Activated CD4-positive, alpha-beta T cell treated with anti-CD3 and anti-CD28 coated beads for 36 hours (primary cell): ENCODE measurements at regions of chr2 and their contacts with region 1.

Region 1: DNA sequence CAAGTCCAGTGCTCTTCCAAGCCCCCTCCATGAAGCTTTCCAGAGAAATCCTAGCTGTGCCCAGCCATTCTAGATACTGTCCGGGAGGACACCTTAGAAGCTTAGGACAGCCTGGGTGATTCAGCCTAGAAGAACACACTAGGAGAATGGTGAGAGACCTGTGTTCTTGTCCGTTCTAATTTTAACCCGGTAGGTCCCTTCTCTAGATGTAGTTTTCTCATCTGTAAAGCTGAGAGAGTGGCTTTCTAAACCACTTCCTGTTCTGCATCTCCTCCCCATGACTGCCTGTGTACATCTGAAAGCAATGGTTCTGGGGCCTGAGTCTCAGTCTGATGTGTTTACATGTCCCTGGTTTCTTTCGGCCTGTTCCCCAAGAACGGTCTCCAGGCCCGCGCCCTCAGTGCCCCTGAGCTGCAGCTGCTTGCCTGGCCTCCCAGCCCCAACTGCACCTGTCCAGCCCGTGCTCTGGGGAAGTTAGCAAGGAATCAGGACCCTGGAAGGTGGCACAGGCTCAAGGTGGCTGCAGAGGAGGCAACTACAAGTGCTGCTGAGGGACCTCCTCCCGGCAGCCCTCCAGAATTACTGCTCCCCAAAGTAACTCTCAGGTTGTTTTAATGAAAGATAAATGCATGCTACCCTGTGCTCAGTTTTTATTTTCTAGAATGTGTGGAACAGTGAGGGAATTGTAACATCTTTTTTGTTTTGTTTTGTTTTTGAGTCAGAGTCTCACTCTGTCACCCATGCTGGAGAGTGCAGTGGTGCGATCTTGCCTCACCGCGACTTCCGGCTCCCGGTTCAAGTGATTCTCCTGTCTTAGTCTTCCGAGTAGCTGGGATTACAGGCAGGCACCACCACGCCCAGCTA is 105.9 kb downstream of the LBH start:
- DNase-seq: peak; percentile 82
- ATAC-seq: peak; percentile 77
- H3K4me3 Mint-ChIP-seq: peak overlapping the region; percentile 56
- H3K27ac Mint-ChIP-seq: peak overlapping the region; percentile 98
- H3K4me1 Mint-ChIP-seq: peaks cover 81% of the 10 kb centered on the region
- H3K27me3 Mint-ChIP-seq: no peaks in the 10 kb centered on the region

Region 2: DNA sequence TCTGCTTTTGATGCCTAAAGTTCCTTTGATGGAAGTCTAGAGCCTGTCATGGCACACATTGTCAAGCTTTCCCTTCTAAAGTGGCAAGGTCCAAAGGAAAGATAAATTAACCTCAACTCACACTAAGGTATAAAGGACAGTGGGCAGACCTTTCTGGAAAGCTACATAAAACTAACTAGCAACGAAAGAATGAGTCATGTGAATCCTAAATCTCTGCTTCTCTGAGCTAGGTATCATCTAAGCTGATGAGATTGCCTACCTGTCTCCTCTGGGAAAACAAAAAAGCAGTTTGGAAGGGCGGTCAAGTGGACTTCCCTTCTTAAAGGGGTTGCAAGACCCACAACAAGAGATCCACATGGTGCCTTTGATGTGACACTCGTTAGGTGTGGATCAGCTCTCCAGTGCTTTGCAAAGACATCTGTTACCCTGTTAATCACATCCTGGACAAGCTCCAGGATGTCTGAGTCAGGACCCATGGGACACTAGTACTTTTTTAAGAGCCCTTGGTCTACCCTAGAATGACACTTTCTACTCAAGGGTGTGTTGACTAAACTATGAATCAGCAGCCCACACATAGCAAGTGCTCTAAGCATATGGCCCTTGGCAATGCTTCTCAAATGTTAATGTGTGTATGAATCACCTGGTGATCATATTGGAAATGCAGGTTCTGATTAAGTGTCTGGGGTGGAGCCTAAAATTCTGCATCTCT is 589.3 kb before region 1 on chr2:
- CTCF ChIA-PET with region 1: no interaction called
- POLR2A ChIA-PET with region 1: no interaction called
- intact Hi-C with region 1: no loop called
- DNase-seq: peak; percentile 22
- ATAC-seq: peak; percentile 97
- H3K4me3 Mint-ChIP-seq: no peak overlapping the region
- H3K27ac Mint-ChIP-seq: no peak overlapping the region
- H3K4me1 Mint-ChIP-seq: peaks cover 2% of the 10 kb centered on the region
- H3K27me3 Mint-ChIP-seq: peaks cover 8% of the 10 kb centered on the region

Region 3: DNA sequence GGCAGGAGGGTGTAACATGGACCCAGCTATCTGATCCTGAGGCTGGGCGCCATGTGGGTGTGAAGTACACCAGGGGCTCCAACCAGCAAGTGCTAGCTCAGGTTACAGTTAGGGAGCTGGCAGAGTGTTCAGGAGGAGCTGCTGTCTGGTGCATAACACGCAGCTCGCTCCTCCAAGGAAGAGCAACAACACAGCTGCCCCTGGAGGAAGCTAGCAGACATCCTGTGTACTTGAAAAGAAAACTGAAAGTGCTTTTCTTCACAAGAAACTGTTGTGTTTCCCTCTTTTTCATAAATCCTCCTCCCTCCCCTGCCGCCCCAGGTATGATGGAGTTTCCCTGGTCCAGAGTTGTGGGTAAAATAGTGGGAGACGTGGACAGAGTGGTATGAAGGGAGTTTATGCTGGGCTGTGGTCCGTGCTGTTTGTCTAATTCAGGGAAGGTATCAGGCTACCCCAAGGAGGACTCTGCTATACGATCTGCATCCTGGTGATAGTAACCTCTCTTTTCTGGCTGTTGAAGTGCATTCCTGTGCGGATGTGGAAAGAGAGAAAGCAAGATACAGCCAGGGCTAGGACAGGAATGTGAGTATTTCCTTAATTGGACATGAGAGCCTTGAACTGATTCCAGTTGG is 112.0 kb before region 1 on chr2:
- CTCF ChIA-PET with region 1: interaction called, 3 read pairs
- POLR2A ChIA-PET with region 1: no interaction called
- intact Hi-C with region 1: loop called (anchors 2 to 5 kb)
- DNase-seq: peak; percentile 58
- ATAC-seq: peak; percentile 64
- H3K4me3 Mint-ChIP-seq: peak overlapping the region; percentile 77
- H3K27ac Mint-ChIP-seq: peak overlapping the region; percentile 93
- H3K4me1 Mint-ChIP-seq: peaks cover 74% of the 10 kb centered on the region
- H3K27me3 Mint-ChIP-seq: peaks cover 9% of the 10 kb centered on the region

Region 4: GRCh38 chr2:30239308-30239985 is 97.8 kb before region 1 on chr2:
- CTCF ChIA-PET with region 1: interaction called, 19 read pairs
- POLR2A ChIA-PET with region 1: interaction called, 11 read pairs
- intact Hi-C with region 1: loop called (anchors 1 to 5 kb)
- DNase-seq: peak; percentile 85
- ATAC-seq: peak; percentile 34
- H3K4me3 Mint-ChIP-seq: peak overlapping the region; percentile 76
- H3K27ac Mint-ChIP-seq: peak overlapping the region; percentile 93
- H3K4me1 Mint-ChIP-seq: peaks cover 93% of the 10 kb centered on the region
- H3K27me3 Mint-ChIP-seq: no peaks in the 10 kb centered on the region

Region 5: GRCh38 chr2:30266051-30266621 is 71.1 kb before region 1 on chr2:
- CTCF ChIA-PET with region 1: interaction called, 6 read pairs
- POLR2A ChIA-PET with region 1: interaction called, 3 read pairs
- intact Hi-C with region 1: loop called (anchors 2 kb)
- DNase-seq: peak; percentile 69
- ATAC-seq: peak; percentile 45
- H3K4me3 Mint-ChIP-seq: peak overlapping the region; percentile 75
- H3K27ac Mint-ChIP-seq: peak overlapping the region; percentile 98
- H3K4me1 Mint-ChIP-seq: peaks cover 83% of the 10 kb centered on the region
- H3K27me3 Mint-ChIP-seq: no peaks in the 10 kb centered on the region

Region 6: DNA sequence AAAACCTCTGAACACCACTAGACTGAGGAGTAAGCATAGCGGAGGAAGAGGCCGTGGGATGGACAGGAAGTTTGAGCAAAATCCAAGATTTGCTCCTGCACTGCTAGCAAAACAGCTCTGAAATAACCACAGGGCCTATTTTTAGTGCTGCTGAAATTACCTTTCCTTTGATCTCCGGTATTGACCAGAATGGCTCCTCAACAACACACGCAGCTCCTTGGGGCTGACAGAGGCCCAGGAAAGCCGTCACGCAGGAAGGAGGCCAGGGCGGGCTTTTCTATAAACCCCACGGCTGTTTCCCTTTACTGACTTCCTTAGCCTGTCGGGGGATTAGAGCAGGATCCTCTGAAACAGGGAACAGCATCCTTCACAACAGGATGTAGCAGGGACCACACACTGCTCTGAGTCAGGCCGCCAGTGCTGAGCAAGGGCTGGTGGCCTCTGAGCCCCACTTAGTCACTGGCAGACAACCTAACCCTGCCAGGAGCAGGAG is 29.0 kb after region 1 on chr2:
- CTCF ChIA-PET with region 1: interaction called, 3 read pairs
- POLR2A ChIA-PET with region 1: no interaction called
- intact Hi-C with region 1: loop called in 1 of 2 experiments (anchors 2 kb)
- DNase-seq: peak; percentile 71
- ATAC-seq: peak; percentile 90
- H3K4me3 Mint-ChIP-seq: no peak overlapping the region
- H3K27ac Mint-ChIP-seq: peak overlapping the region; percentile 74
- H3K4me1 Mint-ChIP-seq: peaks cover 45% of the 10 kb centered on the region
- H3K27me3 Mint-ChIP-seq: no peaks in the 10 kb centered on the region

Region 7: DNA sequence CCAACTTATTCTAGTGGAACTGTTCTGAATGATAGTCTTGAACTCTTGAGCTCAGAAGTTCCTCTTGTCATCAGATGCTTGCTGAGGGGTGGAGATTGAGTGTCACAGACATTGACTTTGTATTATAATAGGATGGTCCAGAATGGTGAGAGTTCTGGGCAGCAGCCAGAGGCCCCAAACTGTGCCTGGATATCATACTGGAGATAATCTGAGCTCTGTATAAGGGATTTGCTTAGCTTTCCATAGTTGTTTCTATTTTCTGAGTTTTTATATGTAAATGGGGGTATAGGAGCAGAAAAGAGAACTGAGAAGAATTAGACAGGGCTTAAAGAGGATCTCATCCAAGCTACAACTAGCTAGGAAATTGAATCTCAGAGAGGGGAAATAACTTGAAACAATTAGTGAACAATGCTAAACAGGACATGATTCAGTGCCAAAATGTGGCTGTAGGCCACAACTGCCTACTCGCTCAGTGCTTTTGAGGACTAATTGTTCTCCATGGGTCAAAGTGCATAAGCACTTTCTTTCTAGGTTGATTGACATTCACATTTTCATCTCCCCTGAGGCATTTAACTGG is 99.7 kb after region 1 on chr2:
- CTCF ChIA-PET with region 1: no interaction called
- POLR2A ChIA-PET with region 1: no interaction called
- intact Hi-C with region 1: no loop called
- DNase-seq: no peak
- ATAC-seq: peak; percentile 70
- H3K4me3 Mint-ChIP-seq: no peak overlapping the region
- H3K27ac Mint-ChIP-seq: no peak overlapping the region
- H3K4me1 Mint-ChIP-seq: peaks cover 31% of the 10 kb centered on the region
- H3K27me3 Mint-ChIP-seq: no peaks in the 10 kb centered on the region